Activated B cell treated with CpG ODN at 0.5 μM for 24 hours (primary cell): ENCODE measurements at regions of chr4 and their contacts with region 1.

Region 1: DNA sequence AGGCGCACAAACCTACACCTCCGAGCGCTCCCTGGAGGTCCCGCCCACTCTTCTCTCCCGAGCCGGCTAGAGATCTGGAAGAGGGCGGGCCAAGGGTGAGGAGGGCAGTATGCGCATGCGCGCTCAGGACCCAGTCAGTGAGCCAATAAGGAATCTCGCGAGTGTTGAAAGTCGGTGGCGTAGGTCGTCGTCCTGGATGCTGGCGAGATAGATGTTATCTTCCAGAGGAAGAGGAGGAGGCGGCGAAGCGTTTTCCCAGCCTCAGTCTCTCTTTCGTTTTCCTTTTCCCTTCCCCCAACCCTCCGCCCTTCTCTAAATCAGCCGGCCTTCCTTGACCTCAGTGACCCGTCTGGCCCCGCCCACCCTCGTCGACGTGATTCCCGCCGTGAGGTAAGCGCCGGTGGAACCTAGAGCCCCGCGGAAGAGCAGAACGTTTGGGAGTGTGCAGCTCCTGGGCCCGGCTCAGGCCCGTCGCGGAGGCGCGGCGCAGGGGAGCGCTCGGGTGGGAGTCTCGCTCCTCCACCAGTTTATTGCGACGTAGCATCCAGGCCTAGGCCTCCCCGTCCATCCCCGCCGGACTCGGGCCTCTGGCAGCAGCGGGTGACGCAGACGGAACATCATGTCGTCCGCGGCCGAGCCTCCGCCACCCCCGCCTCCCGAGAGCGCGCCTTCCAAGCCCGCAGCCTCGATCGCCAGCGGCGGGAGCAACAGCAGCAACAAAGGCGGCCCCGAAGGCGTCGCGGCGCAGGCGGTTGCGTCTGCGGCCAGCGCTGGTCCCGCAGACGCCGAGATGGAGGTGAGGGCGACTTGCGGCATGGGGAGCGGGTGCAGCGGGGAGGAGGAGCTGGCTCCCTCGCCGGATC is at the start of gene SMARCA5:
- DNase-seq: peak; percentile 89
- ATAC-seq: peak; percentile 88
- H3K4me3 Mint-ChIP-seq: peak within 1 kb of the TSS; percentile 99
- H3K27ac Mint-ChIP-seq: peak within 1 kb of the TSS; percentile 100
- H3K4me1 Mint-ChIP-seq: peaks cover 47% of the 10 kb centered on the region
- H3K27me3 Mint-ChIP-seq: no peaks in the 10 kb centered on the region
- CTCF ChIP-seq: no peak
- total RNA-seq, gene SMARCA5: 47.3 and 49.8 TPM in 2 replicates

Region 2: DNA sequence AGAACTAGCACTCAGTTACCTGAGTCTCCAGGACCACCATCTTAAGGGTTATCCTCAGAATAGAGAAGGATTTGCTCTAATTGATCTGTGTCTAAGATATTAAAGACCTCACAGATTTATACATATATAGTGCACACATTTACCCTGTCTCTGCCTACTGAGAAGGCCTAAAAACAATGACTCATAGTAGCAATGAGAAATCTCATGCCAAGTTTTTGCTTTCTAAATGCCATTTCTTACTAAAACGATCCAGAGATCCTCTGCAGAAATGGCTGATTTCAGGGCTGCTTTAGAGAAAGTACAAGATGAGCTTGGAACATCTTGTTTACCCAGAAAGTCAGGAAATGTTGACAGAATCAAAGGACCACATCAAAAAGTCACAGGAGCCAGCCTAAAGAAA is 588.4 kb before region 1 on chr4:
- CTCF ChIA-PET with region 1: no interaction called
- POLR2A ChIA-PET with region 1: no interaction called
- intact Hi-C with region 1: no loop called
- DNase-seq: no peak
- ATAC-seq: no peak
- H3K4me3 Mint-ChIP-seq: no peak overlapping the region
- H3K27ac Mint-ChIP-seq: no peak overlapping the region
- H3K4me1 Mint-ChIP-seq: no peaks in the 10 kb centered on the region
- H3K27me3 Mint-ChIP-seq: no peaks in the 10 kb centered on the region
- CTCF ChIP-seq: no peak

Region 3: GRCh38 chr4:143335979-143336780 is 177.4 kb before region 1 on chr4:
- CTCF ChIA-PET with region 1: no interaction called
- POLR2A ChIA-PET with region 1: interaction called, 5 read pairs
- intact Hi-C with region 1: loop called (anchors 1 kb)
- DNase-seq: peak; percentile 67
- ATAC-seq: peak; percentile 57
- H3K4me3 Mint-ChIP-seq: peak overlapping the region; percentile 95
- H3K27ac Mint-ChIP-seq: peak overlapping the region; percentile 56
- H3K4me1 Mint-ChIP-seq: peaks cover 14% of the 10 kb centered on the region
- H3K27me3 Mint-ChIP-seq: peaks cover 15% of the 10 kb centered on the region
- CTCF ChIP-seq: no peak

Region 4: GRCh38 chr4:143375313-143376073 is 138.0 kb before region 1 on chr4:
- CTCF ChIA-PET with region 1: no interaction called
- POLR2A ChIA-PET with region 1: interaction called, 9 read pairs
- intact Hi-C with region 1: loop called (anchors 1 kb)
- DNase-seq: no peak
- ATAC-seq: peak; percentile 61
- H3K4me3 Mint-ChIP-seq: no peak overlapping the region
- H3K27ac Mint-ChIP-seq: peak overlapping the region; percentile 86
- H3K4me1 Mint-ChIP-seq: peaks cover 68% of the 10 kb centered on the region
- H3K27me3 Mint-ChIP-seq: no peaks in the 10 kb centered on the region
- CTCF ChIP-seq: no peak

Region 5: DNA sequence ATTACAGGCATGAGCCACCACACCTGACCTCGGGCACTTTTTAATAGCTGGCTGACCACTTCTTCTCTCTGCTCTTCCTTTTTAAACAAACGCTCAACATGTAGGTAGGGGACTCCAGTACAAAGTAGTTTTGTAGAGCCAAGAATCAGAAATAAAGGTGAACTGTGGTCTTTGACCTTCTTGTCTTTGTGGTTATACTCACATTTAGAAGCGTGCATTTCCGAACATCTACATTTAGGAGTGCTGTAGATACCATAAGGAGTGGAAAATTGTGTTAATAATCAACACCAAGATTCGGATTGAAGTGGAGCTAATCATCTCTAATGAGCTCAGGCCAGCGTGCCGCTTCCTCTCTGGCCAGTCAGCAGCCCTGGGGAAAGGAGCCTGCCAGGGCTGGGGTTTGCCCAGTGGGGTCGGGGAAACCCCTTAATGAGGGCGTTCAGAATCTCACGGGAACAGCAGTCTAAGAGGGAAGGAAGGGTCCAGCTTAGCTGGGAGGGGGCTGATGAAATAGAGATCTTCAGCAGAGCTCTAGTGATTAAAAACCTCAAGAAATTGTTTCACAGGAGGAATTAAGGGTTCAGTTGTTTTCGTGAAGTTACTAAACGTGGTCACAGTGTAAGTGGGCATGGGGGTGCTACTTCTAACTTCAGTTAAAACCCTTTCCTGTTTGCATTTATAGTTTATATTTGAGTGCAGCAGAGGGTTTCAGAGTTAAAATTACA is 95.7 kb before region 1 on chr4:
- CTCF ChIA-PET with region 1: no interaction called
- POLR2A ChIA-PET with region 1: no interaction called
- intact Hi-C with region 1: loop called (anchors 5 kb)
- DNase-seq: peak; percentile 35
- ATAC-seq: peak; percentile 96
- H3K4me3 Mint-ChIP-seq: peak overlapping the region; percentile 76
- H3K27ac Mint-ChIP-seq: peak overlapping the region; percentile 92
- H3K4me1 Mint-ChIP-seq: peaks cover 36% of the 10 kb centered on the region
- H3K27me3 Mint-ChIP-seq: no peaks in the 10 kb centered on the region
- CTCF ChIP-seq: no peak

Region 6: GRCh38 chr4:143558823-143559756 is 45.6 kb after region 1 on chr4:
- CTCF ChIA-PET with region 1: interaction called, 3 read pairs
- POLR2A ChIA-PET with region 1: interaction called, 4 read pairs
- intact Hi-C with region 1: loop called (anchors 1 kb)
- DNase-seq: peak; percentile 52
- ATAC-seq: peak; percentile 88
- H3K4me3 Mint-ChIP-seq: peak overlapping the region; percentile 94
- H3K27ac Mint-ChIP-seq: peak overlapping the region; percentile 92
- H3K4me1 Mint-ChIP-seq: peaks cover 28% of the 10 kb centered on the region
- H3K27me3 Mint-ChIP-seq: no peaks in the 10 kb centered on the region
- CTCF ChIP-seq: no peak

Region 7: GRCh38 chr4:143728166-143728565 is 214.6 kb after region 1 on chr4:
- CTCF ChIA-PET with region 1: no interaction called
- POLR2A ChIA-PET with region 1: no interaction called
- intact Hi-C with region 1: no loop called
- DNase-seq: no peak
- ATAC-seq: no peak
- H3K4me3 Mint-ChIP-seq: no peak overlapping the region
- H3K27ac Mint-ChIP-seq: no peak overlapping the region
- H3K4me1 Mint-ChIP-seq: no peaks in the 10 kb centered on the region
- H3K27me3 Mint-ChIP-seq: no peaks in the 10 kb centered on the region
- CTCF ChIP-seq: no peak

Region 8: GRCh38 chr4:143782521-143782920 is 269.0 kb after region 1 on chr4:
- CTCF ChIA-PET with region 1: no interaction called
- POLR2A ChIA-PET with region 1: no interaction called
- intact Hi-C with region 1: no loop called
- DNase-seq: no peak
- ATAC-seq: no peak
- H3K4me3 Mint-ChIP-seq: no peak overlapping the region
- H3K27ac Mint-ChIP-seq: no peak overlapping the region
- H3K4me1 Mint-ChIP-seq: no peaks in the 10 kb centered on the region
- H3K27me3 Mint-ChIP-seq: peaks cover 2% of the 10 kb centered on the region
- CTCF ChIP-seq: no peak